A549 (cell line): ENCODE measurements at regions of chr4 and their contacts with region 1.

Region 1: DNA sequence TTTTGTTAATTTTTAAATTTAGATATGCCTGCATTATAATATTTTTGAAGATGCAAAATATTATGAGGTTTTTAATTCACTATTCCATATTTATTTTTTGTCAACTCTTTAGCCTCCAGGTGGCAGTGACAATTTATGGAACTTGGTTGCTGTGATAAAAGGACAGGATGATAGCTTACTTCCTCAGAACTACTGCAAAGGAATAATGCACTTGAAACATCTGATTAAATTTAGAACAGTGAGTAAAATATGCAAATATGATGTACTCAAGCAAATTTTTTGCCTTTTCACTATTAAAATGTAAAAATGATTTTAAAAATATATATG is 45.1 kb downstream of the SPATA4 start:
- DNase-seq: peak in 1 of 2 experiments; percentile 18
- ATAC-seq: 0 out of 6 replicates have a peak, but pooled peaks of 1 of the 2 experiments have one; percentile 39
- H3K4me3 ChIP-seq: no peak overlapping the region
- H3K27ac ChIP-seq: no peak overlapping the region
- H3K4me1 ChIP-seq: no peaks in the 10 kb centered on the region
- CTCF ChIP-seq: peak; percentile 38; the same call in 2 of the 3 replicates
- EP300 ChIP-seq: no peak
- POLR2A ChIP-seq: no peak
- RAD21 ChIP-seq: peak; percentile 63 to 67

Region 2: GRCh38 chr4:176277162-176277904 is 127.0 kb after region 1 on chr4:
- CTCF ChIA-PET with region 1: interaction called, 20 read pairs
- POLR2A ChIA-PET with region 1: interaction called, 5 read pairs
- DNase-seq: peak; percentile 55 to 56
- ATAC-seq: peak; percentile 93 to 97
- H3K4me3 ChIP-seq: no peak overlapping the region
- H3K27ac ChIP-seq: peak overlapping the region; percentile 29 to 34; a peak in 3 of 6 replicates
- H3K4me1 ChIP-seq: peaks cover 14% of the 10 kb centered on the region; the same call in 2 of the 3 replicates
- CTCF ChIP-seq: peak; percentile 45
- EP300 ChIP-seq: no peak
- POLR2A ChIP-seq: no peak
- RAD21 ChIP-seq: peak; percentile 52 to 54